ENCODE measurements at regions of chr22 and their contacts with region 1.

Region 1: DNA sequence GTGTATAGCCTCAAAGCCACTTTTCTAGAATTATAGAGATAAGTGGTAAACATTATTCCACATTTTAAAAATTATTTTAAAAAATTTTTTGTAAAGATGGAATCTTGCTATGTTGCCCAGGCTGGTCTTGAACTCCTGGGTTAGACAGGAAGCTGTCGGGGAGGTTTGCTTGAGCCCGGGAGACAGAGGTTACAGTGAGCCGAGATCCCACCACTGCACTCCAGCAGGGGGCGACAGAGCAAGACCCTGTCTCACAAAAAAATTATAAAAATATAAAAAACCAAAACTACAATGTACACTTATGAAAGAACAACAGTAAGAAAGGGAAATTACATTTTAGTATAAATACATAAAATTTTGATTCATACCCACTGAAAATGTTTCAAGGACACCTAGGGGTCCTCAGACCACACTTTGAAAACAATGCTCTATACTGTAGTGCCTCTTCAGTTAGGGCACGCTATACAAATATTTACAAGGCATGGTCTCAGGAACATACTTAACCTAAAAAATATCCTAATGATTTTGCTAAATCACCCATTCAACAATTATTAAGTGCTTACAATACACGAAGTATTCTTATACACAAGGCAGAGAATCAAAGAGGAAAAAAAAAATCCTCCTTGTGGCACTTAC is 111.2 kb downstream of the MRTFA start:
- DNase-seq: peak; percentile 51 to 61
- ATAC-seq: peak in 3 of 4 donors; percentile 57 to 70 (median 65)
- H3K4me3 ChIP-seq: no peak overlapping the region
- H3K27ac ChIP-seq: no peak overlapping the region
- H3K4me1 ChIP-seq: peaks cover 4% of the 10 kb centered on the region
- H3K27me3 ChIP-seq: no peaks in the 10 kb centered on the region
- CTCF ChIP-seq: peak; percentile 68

Region 2: DNA sequence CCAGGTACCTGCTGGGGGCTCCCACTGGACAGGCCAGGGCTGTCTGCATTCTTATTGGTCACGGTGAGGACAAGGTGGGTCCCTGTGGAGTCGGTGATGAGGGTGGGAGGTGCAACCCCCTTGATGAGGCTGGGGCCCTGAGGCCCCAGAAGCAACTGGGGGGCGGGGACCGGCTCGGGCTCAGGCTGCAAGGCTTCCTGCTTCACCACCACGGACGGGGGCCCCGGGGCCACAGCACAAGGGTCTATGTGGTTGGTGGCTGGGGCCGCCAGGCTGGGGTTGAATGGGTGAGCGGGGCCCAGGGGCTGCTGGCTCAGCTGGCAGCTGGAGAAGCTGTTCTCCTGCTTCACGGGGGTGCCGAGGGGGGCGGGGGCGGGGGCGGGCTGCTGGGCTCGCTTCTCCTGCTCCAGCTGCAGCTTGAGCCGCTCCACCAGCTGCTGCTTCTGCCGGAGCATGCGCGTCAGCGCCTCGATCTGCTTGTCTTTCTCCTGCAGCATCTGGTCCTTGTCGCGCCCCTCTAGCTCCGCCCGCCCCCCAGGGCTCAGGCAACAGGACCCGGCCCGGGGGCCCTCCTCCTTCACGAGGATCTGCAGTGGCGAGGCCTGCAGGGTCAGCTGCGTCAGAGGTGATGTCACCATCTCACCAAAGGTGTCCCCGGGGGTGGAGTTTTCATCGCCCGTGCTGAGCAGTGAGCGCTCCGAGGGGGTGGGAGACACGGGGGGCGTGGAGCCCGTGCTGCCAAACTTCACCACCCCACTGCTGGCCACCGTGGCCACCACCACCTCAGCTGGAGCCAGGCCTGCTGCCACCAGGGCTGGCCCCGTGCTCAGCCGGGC is 106.8 kb before region 1 on chr22:
- intact Hi-C with region 1: no loop called
- DNase-seq: no peak
- ATAC-seq: no peak
- H3K4me3 ChIP-seq: no peak overlapping the region
- H3K27ac ChIP-seq: no peak overlapping the region
- H3K4me1 ChIP-seq: peaks cover 15% of the 10 kb centered on the region
- H3K27me3 ChIP-seq: no peaks in the 10 kb centered on the region
- CTCF ChIP-seq: no peak

Region 3: GRCh38 chr22:40645579-40646197 is 120.3 kb after region 1 on chr22:
- intact Hi-C with region 1: loop called in 1 of 2 experiments (anchors 5 kb)
- DNase-seq: no peak
- ATAC-seq: peak in 1 of 4 donors; percentile 3
- H3K4me3 ChIP-seq: peak overlapping the region; percentile 47
- H3K27ac ChIP-seq: no peak overlapping the region
- H3K4me1 ChIP-seq: no peaks in the 10 kb centered on the region
- H3K27me3 ChIP-seq: no peaks in the 10 kb centered on the region
- CTCF ChIP-seq: no peak

Measured in psoas muscle (tissue), 8 donors.